ENCODE measurements at regions of chr1 and their contacts with region 1.

Region 1: DNA sequence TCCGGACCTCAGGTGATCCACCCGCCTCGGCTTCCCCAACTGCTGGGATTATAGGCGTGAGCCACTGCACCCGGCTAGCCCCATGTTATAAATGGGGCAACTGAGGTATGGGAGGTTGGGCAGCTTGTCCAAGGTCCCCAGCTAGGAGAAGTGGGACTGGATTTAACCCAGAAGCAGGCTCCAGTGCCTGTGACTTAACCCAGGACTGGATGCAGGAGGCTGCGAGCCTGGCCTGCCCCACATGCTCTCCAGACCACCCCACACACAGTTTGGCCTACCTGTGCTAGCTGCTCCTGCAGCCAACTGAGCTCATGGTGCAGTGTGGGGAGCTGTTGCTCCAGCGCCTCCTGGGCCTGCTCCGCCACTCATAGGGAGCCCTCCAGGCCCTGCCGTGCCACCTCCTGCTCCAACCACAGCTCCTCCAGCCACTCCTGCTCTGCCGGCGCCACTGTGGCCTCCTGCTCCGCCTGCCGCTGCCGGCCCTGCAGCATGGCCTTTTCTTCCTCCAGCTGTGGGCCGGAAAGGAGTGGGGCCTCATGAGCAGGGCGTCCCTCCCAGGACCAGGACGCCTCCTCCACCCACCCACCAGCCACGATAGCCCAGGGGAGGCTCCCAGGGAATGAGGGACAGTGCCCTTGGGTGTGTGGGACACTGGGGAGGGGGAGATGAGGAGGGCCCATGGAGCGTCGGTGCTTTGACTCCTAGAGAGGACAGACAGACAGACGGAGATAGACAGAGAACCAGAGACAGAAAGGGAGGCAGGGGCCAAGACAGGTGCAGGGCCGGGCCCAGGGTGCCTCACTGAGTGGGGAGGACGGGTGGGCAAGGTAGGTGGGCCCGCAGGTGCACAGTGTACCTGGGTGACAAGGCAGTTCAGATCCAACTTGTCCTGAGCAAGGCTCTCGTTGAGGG is 12.4 kb upstream of the NBPF1 start:
- DNase-seq: peak; percentile 52
- CTCF ChIP-seq: no peak

Region 2: DNA sequence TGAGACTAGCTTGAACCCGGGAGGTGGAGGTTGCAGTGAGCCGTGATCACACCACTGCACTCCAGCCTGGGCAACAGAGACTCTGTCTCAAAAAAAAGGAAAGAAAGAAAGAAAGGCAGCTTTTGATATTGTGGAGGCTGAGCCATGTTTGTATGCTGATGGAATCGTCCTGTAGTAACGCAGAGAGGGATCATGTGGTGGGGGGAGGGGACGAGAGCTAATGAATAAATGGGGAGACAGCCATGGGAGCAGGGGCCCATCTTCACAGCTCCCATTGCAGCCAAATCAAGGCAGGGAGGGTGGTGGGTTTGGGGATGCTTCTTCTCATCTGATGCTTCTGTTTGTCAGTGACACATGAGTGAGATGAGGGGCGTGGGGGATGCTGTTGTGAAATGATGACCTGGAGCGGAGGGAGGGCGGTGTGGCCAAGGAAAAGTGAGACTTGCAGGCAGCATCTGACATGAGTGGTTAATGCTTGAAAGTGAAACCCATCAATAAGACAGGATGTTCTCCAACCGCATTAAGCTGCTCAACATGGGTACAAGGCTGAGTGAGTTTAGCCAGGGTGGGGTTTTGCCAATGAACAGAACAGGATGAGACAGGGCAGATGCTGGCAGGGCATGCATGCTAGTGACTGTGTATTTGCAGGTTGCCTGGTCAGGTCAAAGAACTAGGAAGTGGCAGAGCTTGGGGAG is 205.2 kb before region 1 on chr1:
- CTCF ChIA-PET with region 1: no interaction called
- POLR2A ChIA-PET with region 1: no interaction called
- DNase-seq: peak; percentile 59
- CTCF ChIP-seq: no peak

Region 3: GRCh38 chr1:16451841-16452528 is 173.8 kb before region 1 on chr1:
- CTCF ChIA-PET with region 1: no interaction called
- POLR2A ChIA-PET with region 1: no interaction called
- DNase-seq: peak; percentile 47
- CTCF ChIP-seq: no peak

Region 4: DNA sequence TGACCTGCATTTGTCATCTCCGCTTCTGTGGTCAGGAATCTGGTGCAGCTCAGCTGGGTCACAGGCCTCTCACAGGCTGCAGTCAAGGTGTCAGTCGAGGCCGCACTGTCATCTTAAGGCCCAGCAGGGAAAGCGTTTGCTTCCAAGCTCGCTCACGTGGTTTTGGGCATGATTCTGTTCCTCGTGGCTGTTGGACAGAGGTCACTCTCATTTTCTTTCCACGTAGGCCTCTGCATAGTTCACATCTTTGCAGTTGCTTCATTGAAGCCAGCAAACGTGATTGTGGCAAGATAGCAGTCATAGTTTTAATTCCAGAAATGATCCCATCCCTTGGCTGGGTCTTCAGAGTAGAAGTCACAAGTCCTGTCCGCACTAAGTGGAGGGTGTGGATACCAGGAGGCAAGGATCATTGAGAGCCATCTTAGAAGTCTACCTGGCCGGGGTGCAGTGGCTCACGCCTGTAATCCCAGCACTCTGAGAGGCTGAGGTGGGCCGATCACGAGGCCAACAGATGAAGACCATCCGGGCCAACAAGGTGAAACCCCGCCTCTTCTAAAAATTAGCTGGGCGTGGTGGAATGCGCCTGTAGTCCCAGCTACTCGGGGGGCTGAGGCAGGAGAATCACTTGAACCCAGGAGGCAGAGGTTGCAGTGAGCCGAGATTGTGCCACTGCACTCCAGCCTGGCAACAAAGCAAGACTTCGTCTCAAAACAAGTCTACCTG is 160.7 kb before region 1 on chr1:
- CTCF ChIA-PET with region 1: no interaction called
- POLR2A ChIA-PET with region 1: no interaction called
- DNase-seq: no peak
- CTCF ChIP-seq: no peak

Region 5: GRCh38 chr1:16607433-16607851 is 18.3 kb before region 1 on chr1:
- CTCF ChIA-PET with region 1: interaction called, 61 read pairs
- POLR2A ChIA-PET with region 1: no interaction called
- DNase-seq: no peak
- CTCF ChIP-seq: no peak

Region 6: DNA sequence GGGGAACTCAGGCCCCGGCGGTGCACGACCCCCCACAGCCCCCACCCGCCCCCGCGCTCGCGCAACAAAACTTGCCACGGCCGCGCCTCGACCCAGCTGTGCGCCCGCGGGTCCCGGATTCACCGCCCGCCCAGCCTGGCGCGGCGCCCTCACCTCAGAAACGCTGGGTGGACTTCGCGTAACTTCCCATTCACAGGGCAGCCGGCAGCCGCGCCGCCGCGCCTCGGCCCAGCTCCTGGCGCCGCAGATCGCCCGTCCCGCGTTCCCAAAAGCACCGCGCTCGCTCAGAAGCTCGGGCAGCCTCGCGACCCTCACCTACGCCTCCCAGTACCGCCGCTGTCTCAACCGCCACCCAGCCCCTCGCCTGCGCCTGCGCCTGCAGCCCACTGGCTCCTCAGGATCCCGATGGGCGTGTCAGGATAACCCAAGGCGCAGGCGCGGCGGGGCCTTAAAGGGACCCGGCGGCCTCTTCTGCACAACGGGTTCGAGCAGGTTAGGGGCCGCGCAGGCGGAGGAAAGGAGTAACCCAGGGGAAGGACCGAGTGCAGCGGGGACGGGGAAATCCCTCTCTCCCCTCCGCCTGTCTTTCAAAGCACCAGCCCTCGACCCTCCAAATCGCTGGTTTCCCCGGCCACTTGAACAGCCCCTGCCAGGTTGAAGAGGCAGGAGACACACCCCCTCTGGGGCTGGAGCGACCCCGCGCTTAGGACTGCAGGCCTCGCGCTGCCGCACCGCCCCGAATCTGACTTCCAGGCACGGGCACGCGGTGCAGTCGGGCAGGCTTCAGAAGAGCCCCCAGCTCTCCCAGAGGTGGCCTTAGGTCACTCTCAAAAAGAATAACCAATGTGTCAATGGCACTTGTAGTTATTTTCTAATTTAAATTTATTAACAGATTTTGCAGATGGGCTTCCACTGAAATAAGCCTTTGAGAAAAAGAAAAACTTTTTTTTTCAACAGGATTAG is 12.3 kb before region 1 on chr1 and contains the start of gene NBPF1:
- CTCF ChIA-PET with region 1: interaction called, 61 read pairs
- POLR2A ChIA-PET with region 1: no interaction called
- DNase-seq: peak; percentile 100
- CTCF ChIP-seq: peak; percentile 7

Region 7: DNA sequence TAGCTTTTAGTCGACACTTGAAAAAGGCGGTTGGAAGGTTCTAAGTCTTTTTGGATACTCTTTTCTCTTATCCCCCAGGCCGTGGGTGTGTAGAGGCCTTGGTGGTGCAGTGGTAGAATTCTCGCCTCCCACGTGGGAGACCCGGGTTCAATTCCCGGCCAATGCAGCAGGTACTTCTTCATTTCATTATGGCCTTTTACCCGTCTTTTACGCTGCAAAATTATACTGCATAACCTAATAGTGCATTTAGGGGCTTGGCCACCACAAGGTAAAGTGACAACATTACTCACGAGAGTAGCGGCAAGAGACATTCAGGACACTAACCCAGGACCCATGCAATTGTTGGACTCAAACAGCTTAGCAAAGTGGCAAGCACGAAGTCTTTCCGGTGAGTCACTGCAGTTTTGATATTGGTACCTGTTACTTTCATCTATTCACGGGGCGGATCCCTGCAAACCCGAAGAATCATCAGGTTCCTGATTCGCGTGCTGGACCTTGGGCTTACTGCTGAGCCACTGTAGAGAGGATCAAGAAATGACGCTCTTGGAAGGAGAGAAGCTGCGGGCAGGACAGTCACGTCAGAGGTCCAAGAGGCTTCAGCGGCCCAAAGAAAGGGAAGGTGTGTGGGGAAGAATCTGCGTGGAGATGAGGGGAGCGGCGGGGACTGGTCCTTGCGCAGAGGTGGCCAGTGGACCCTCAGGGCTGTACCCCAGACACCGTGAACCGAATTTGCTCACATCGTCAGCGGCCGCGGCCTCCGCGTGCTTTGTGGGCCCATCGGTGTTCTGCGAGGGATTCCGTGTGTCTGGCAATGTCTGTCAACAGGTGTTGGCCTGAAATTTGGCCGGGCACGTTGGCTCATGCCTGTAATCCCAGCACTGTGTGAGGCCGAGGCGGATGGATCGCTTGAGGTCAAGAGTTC is 101.7 kb after region 1 on chr1:
- CTCF ChIA-PET with region 1: no interaction called
- POLR2A ChIA-PET with region 1: no interaction called
- DNase-seq: peak; percentile 64
- CTCF ChIP-seq: no peak

Measured in GM10248 (cell line).